CD4-positive, alpha-beta T cell (primary cell): ENCODE measurements at regions of chr12 and their contacts with region 1.

Region 1: DNA sequence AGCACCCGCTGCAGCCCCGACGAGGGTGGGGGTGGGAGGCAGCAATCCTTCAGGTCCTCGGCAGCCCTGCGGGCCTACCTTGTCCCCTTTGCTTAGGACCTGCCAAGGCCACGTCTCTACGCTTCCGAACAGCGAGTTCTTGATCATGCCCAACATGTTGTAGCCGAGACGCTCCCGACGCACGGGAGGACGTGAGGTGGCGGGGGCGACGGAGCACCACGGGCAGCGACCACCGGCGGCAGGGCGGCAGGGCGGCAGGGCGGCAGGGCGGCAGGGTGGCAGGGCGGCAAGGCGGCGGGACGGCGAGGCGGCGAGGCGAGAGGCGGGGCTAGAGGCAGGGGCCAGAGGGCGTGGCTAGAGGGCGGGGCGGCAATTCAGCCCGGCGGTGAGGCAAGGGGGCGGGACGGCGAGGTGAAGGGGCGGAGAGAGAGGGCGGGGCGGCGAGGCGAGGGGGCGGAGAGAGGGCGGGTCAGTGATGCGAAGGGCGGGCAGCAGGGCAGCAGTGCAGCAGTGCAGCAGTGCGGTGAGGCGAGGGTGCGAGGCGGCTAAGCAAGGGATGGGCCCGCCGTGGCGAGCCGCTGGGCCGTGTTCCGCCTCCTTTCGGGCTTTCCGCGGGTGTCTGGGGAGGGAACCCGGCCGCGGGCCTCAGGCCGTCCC is at the start of gene HEBP1:
- DNase-seq: peak; percentile 92 to 98 (median 96)
- ATAC-seq: peak; percentile 87
- H3K4me3 ChIP-seq: peak within 1 kb of the TSS; percentile 95
- H3K4me3 Mint-ChIP-seq: peak within 1 kb of the TSS; percentile 93
- H3K27ac ChIP-seq: peak within 1 kb of the TSS; percentile 32 to 45
- H3K27ac Mint-ChIP-seq: peak within 1 kb of the TSS; percentile 89
- H3K4me1 ChIP-seq: peaks cover 29% of the 10 kb centered on the region
- H3K4me1 Mint-ChIP-seq: peaks cover 42% of the 10 kb centered on the region
- H3K27me3 ChIP-seq: peaks cover 0 to 3% of the 10 kb centered on the region in 2 experiments
- H3K27me3 Mint-ChIP-seq: no peaks in the 10 kb centered on the region
- CTCF ChIP-seq: no peak
- total RNA-seq, gene HEBP1: 11.9 to 12.5 TPM

Region 2: GRCh38 chr12:13044002-13044905 is 44.2 kb after region 1 on chr12 and contains the start of gene FAM234B:
- CTCF ChIA-PET with region 1: no interaction called
- POLR2A ChIA-PET with region 1: interaction called, 12 read pairs
- intact Hi-C with region 1: loop called in 1 of 2 experiments (anchors 2 kb)
- DNase-seq: peak; percentile 48 to 83 (median 68)
- ATAC-seq: peak; percentile 93
- H3K4me3 ChIP-seq: peak within 1 kb of the TSS; percentile 84
- H3K4me3 Mint-ChIP-seq: peak within 1 kb of the TSS; percentile 92
- H3K27ac ChIP-seq: no peak within 1 kb of the TSS
- H3K27ac Mint-ChIP-seq: no peak within 1 kb of the TSS
- H3K4me1 ChIP-seq: peaks cover 10% of the 10 kb centered on the region
- H3K4me1 Mint-ChIP-seq: peaks cover 14% of the 10 kb centered on the region
- H3K27me3 ChIP-seq: no peaks in the 10 kb centered on the region
- H3K27me3 Mint-ChIP-seq: no peaks in the 10 kb centered on the region
- CTCF ChIP-seq: no peak
- total RNA-seq, gene FAM234B: 3.0 to 3.2 TPM